ENCODE measurements at regions of chr4 and their contacts with region 1.

Region 1: DNA sequence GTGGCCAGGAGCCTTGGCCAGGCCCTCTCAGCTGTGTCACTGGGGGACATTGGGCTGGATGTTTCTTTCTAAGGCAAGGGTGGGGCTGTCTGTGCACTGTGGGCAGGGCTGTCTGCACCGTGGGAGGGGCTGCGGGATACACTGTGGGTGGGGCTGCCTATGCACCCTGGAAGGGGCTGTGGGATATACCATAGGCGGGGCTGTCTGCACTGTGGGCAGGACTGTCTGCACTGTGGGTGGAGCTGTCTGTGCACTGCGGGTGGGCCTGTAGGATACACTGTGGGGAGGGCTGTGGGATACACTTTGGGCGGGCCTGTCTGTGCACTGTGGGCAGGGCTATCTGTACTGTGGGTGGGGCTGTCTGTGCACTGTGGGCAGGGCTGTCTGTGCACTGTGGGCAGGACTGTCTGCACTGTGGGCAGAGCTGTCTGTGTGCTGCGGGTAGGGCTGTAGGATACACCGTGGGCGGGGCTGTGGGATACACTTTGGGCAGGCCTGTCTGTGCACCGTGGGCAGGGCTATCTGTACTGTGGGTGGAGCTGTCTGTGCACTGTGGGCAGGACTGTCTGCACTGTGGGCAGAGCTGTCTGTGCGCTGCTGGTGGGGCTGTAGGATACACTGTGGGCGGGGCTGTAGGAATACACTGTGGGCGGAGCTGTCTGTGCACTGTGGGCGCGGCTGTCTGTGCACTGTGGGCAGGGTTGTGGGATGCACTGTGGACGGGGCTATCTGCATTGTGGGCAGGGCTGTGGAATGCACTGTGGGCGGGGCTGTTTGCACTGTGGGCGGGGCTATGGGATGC is 31.1 kb downstream of the ACOX3 start:
- DNase-seq: peak in 1 of 6 donors; percentile 32
- ATAC-seq: peak in 3 of 4 donors; percentile 56 to 66 (median 63)
- H3K4me3 ChIP-seq: no peak overlapping the region
- H3K27ac ChIP-seq: no peak overlapping the region
- H3K4me1 ChIP-seq: no peaks in the 10 kb centered on the region
- H3K27me3 ChIP-seq: no peaks in the 10 kb centered on the region
- CTCF ChIP-seq: no peak

Region 2: GRCh38 chr4:8241895-8242696 is 167.4 kb before region 1 on chr4:
- intact Hi-C with region 1: loop called in 2 of 3 experiments (anchors 5 kb)
- DNase-seq: peak; percentile 54 to 98 (median 80)
- ATAC-seq: peak; percentile 76 to 89 (median 87)
- H3K4me3 ChIP-seq: no peak overlapping the region
- H3K27ac ChIP-seq: no peak overlapping the region
- H3K4me1 ChIP-seq: no peaks in the 10 kb centered on the region
- H3K27me3 ChIP-seq: no peaks in the 10 kb centered on the region
- CTCF ChIP-seq: peak; percentile 95 to 99 (median 97)

Region 3: DNA sequence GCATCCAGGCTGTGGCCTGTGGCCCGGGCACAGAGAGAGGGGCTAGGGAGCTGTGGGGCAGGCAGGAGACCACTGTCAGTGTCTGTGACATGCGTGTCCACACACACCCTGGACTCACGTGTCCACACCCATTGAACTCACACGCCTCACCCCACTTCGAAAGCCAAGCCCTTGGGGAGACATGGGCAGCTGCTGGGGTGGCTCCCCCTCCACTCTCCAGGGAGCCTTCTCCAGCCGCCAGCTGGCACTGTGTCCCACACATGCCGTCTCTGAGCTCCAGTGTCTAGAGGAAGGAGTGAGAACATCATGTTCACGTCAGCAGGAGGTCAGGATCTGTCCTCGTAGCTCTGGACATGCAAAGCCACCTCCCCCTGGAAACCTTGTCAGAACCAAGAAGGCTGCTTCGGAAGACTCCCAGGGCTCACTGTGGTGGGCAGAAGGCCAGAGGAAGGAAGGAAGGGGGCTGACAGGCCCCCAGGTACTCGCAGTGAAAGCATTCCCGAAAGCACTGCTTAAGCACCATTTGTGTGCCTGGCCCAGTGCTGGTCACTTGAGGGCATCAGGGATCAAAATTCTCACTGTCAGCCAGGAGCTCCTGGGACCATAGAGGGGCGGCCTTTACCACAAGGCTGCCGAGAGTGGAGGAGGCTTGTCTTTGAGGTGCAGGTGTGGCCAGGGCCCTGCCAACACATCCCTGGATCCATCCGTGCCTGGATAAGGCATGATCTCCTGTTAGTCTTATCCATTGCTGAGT is 78.5 kb before region 1 on chr4:
- intact Hi-C with region 1: no loop called
- DNase-seq: peak in 2 of 6 donors; percentile 36 to 37
- ATAC-seq: peak in 1 of 4 donors; percentile 43
- H3K4me3 ChIP-seq: no peak overlapping the region
- H3K27ac ChIP-seq: no peak overlapping the region
- H3K4me1 ChIP-seq: no peaks in the 10 kb centered on the region
- H3K27me3 ChIP-seq: no peaks in the 10 kb centered on the region
- CTCF ChIP-seq: no peak